PC-9 (cell line): ENCODE measurements at regions of chr2 and their contacts with region 1.

Region 1: GRCh38 chr2:96618604-96619283 is 19.4 kb downstream of the KANSL3 start:
- DNase-seq: no peak
- H3K4me3 ChIP-seq: no peak overlapping the region
- H3K27ac ChIP-seq: no peak overlapping the region
- H3K4me1 ChIP-seq: no peaks in the 10 kb centered on the region
- H3K27me3 ChIP-seq: no peaks in the 10 kb centered on the region
- CTCF ChIP-seq: no peak

Region 2: DNA sequence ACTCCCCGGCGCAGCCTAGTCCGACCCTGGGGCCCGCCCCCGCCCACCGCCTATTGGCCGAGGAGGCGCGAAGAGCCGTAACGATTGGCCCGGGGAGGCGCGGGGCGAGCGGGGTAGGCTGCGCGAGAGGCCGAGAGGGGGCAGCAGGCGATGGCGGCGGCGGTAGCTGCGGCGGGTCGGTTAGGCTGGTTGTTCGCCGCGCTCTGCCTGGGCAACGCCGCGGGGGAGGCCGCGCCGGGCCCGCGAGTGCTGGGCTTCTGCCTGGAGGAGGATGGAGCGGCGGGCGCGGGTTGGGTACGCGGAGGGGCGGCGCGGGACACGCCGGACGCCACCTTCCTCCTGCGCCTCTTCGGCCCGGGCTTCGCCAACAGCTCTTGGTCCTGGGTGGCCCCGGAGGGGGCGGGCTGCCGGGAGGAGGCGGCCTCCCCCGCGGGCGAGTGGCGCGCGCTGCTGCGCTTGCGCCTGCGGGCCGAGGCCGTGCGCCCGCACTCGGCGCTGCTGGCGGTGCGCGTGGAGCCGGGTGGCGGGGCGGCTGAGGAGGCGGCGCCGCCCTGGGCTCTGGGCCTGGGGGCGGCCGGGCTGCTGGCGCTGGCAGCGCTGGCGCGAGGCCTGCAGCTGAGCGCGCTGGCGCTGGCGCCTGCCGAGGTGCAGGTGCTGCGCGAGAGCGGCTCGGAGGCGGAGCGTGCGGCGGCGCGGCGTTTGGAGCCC is 197.5 kb after region 1 on chr2 and contains the start of gene CNNM3:
- CTCF ChIA-PET with region 1: no interaction called
- POLR2A ChIA-PET with region 1: no interaction called
- intact Hi-C with region 1: no loop called
- DNase-seq: peak; percentile 87 to 99
- H3K4me3 ChIP-seq: peak within 1 kb of the TSS; percentile 87
- H3K27ac ChIP-seq: peak within 1 kb of the TSS; percentile 7; the same call in 1 of the 2 replicates
- H3K4me1 ChIP-seq: peaks cover 26% of the 10 kb centered on the region
- H3K27me3 ChIP-seq: no peaks in the 10 kb centered on the region
- CTCF ChIP-seq: peak; percentile 74
- total RNA-seq, gene CNNM3: 28.7 and 28.8 TPM in 2 replicates

Region 3: GRCh38 chr2:96832754-96833507 is 214.2 kb after region 1 on chr2:
- CTCF ChIA-PET with region 1: no interaction called
- POLR2A ChIA-PET with region 1: interaction called, 14 read pairs
- intact Hi-C with region 1: no loop called
- DNase-seq: peak; percentile 90 to 94
- H3K4me3 ChIP-seq: peak overlapping the region; percentile 30; the same call in 1 of the 2 replicates
- H3K27ac ChIP-seq: peak overlapping the region; percentile 86
- H3K4me1 ChIP-seq: peaks cover 25% of the 10 kb centered on the region
- H3K27me3 ChIP-seq: no peaks in the 10 kb centered on the region
- CTCF ChIP-seq: no peak